K562 (cell line): ENCODE measurements at regions of chr6 and their contacts with region 1.

Region 1: DNA sequence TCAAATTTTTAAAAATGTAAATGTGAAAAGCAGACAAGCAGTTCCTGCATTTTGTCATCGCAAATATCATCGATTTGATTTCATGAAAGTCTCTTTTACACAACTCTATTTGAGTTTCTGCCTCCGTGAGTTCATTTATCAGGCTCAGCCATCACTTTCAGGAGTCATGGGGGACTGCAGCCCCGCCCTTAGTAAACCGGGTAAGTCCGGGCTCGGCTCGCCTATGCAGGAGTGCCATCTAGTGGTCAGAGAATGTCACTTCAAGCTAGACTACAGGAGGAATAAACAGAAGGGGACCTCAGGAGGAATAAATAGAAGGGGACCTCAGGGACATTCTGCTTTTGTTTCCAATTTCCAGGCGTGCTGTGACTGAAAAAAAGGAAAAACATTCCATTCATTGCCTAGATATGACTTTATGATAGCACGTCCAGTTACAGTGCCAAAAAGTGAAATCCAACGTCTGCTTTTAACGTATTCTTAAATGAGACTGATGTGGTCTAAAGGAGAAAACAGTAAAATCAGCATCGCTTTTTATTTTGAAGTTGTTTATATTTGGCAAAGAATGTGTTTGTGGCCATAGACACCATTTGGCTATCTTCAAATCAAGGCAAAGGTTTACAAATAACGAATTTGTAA is 333.9 kb downstream of the HACE1 start:
- DNase-seq: peak; percentile 88 to 90 (median 90)
- ATAC-seq: peak; percentile 98
- H3K4me3 ChIP-seq: no peak overlapping the region
- H3K27ac ChIP-seq: no peak overlapping the region
- H3K4me1 ChIP-seq: no peaks in the 10 kb centered on the region
- H3K27me3 ChIP-seq: no peaks in the 10 kb centered on the region
- CTCF ChIP-seq: peak; percentile 81 to 94 (median 87)
- EP300 ChIP-seq: 0 out of 2 replicates have a peak, but pooled peaks have one; percentile 19
- POLR2A ChIP-seq: no peak
- RAD21 ChIP-seq: peak; percentile 93 to 95

Region 2: GRCh38 chr6:103507052-103507451 is 1018.7 kb before region 1 on chr6:
- CTCF ChIA-PET with region 1: no interaction called
- POLR2A ChIA-PET with region 1: no interaction called
- in situ Hi-C with region 1: no loop called
- intact Hi-C with region 1: no loop called
- DNase-seq: no peak
- ATAC-seq: no peak
- H3K4me3 ChIP-seq: no peak overlapping the region
- H3K27ac ChIP-seq: no peak overlapping the region
- H3K4me1 ChIP-seq: no peaks in the 10 kb centered on the region
- H3K27me3 ChIP-seq: no peaks in the 10 kb centered on the region
- CTCF ChIP-seq: no peak
- EP300 ChIP-seq: no peak
- POLR2A ChIP-seq: no peak
- RAD21 ChIP-seq: no peak

Region 3: DNA sequence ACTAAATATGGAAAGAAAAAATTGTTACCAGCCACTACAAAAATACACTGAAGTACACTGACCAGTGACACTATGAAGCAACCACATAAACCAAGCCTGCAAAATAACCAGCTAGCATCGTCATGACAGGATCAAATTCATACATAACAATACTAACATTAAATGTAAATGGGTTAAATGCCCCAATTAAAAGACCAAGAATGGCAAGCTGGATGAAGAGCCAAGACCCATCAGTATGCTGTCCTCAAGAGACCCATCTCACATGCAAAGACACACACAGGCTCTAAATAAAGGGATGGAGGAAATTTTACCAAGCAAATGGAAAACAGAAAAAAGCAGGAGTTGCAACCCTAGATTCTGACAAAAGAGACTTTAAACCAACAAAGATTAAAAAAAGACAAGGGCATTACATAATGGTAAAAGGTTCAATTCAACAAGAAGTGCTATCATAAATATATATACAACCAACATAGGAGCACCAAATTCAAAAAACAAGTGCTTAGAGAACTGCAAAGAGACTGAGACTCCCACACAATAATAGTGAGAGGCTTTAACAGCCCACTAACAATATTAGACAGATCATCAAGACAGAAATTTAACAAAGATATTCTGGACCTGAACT is 229.1 kb after region 1 on chr6:
- CTCF ChIA-PET with region 1: no interaction called
- POLR2A ChIA-PET with region 1: no interaction called
- in situ Hi-C with region 1: loop called (anchors 10 kb)
- intact Hi-C with region 1: no loop called
- DNase-seq: no peak
- ATAC-seq: no peak
- H3K4me3 ChIP-seq: no peak overlapping the region
- H3K27ac ChIP-seq: no peak overlapping the region
- H3K4me1 ChIP-seq: no peaks in the 10 kb centered on the region
- H3K27me3 ChIP-seq: no peaks in the 10 kb centered on the region
- CTCF ChIP-seq: no peak
- EP300 ChIP-seq: no peak
- POLR2A ChIP-seq: no peak
- RAD21 ChIP-seq: no peak

Region 4: GRCh38 chr6:104771258-104771832 is 245.6 kb after region 1 on chr6:
- CTCF ChIA-PET with region 1: no interaction called
- POLR2A ChIA-PET with region 1: no interaction called
- in situ Hi-C with region 1: no loop called
- intact Hi-C with region 1: loop called (anchors 1 kb)
- DNase-seq: peak; percentile 13 to 22 (median 14)
- ATAC-seq: peak; percentile 91
- H3K4me3 ChIP-seq: no peak overlapping the region
- H3K27ac ChIP-seq: no peak overlapping the region
- H3K4me1 ChIP-seq: no peaks in the 10 kb centered on the region
- H3K27me3 ChIP-seq: no peaks in the 10 kb centered on the region
- CTCF ChIP-seq: peak; percentile 31 to 78 (median 46); a peak in 5 of 6 replicates
- EP300 ChIP-seq: no peak
- POLR2A ChIP-seq: no peak
- RAD21 ChIP-seq: peak; percentile 83 to 86